ENCODE measurements at regions of chr6 and their contacts with region 1.

Region 1: DNA sequence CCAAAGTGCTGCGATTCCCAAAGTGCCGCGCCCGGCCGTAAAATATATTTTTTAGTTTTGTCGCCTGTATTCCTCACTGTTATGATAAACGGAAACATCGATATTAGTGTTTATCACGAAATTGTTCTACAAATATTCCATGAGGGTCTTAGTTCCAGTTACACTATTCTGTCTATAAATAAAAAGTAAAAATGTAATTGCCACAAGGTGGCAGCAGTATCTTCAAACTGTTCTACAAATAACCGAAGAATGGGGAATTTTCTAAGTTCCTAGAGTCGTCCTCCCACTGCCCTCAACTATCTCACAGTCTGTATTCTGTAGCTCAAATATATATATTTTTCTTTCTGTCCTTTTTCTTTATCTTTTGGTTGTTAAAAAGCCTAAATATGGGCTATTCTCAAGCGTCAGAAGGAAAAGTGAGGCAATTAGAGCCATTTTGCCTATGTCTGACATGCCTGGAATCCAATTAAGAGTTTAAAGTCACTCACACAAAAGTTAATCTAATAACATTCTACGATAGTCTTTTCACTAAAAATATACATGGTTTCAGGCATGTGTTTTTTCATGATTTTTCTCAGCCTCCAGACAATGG is 14.2 kb upstream of the FAM162B start:
- DNase-seq: peak; percentile 58
- ATAC-seq: peak; percentile 86
- H3K4me3 ChIP-seq: peak overlapping the region in 1 of 3 experiments; percentile 1; a peak in 1 of 6 replicates
- H3K27ac ChIP-seq: no peak overlapping the region
- H3K4me1 ChIP-seq: no peaks in the 10 kb centered on the region
- H3K27me3 ChIP-seq: no peaks in the 10 kb centered on the region; a peak in 1 of 5 replicates
- CTCF ChIP-seq: peak; percentile 72
- EP300 ChIP-seq: no peak
- POLR2A ChIP-seq: no peak
- RAD21 ChIP-seq: no peak

Region 2: DNA sequence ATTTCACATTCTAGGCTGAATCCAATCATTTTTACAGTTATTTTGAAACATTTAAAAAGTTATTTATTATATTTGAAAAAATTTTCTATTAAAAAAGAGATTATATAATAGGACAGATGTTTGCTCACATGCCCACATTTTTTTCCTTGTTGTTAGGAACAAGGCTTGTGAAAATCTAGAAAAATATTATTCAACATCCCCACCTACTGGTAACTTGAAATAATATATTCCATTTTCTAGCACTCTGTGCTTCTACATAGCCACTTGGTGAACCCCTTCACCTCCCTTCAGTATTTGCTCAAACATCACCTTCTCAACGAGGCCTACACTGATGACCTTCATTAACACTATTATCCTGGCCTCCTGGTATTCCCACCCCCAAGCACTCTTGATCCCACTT is 67.6 kb after region 1 on chr6:
- CTCF ChIA-PET with region 1: interaction called, 30 read pairs
- POLR2A ChIA-PET with region 1: no interaction called
- in situ Hi-C with region 1: loop called (anchors 5 kb)
- intact Hi-C with region 1: loop called (anchors 1 kb)
- DNase-seq: peak; percentile 59
- ATAC-seq: peak; percentile 87
- H3K4me3 ChIP-seq: no peak overlapping the region
- H3K27ac ChIP-seq: no peak overlapping the region
- H3K4me1 ChIP-seq: peaks cover 16% of the 10 kb centered on the region
- H3K27me3 ChIP-seq: no peaks in the 10 kb centered on the region
- CTCF ChIP-seq: peak; percentile 62
- EP300 ChIP-seq: no peak
- POLR2A ChIP-seq: no peak
- RAD21 ChIP-seq: peak; percentile 55; the same call in 1 of the 2 replicates